Gastrocnemius medialis (tissue), 4 donors: ENCODE measurements at regions of chr16 and their contacts with region 1.

Region 1: GRCh38 chr16:30445408-30446202 is at the start of gene SEPHS2:
- DNase-seq: peak; percentile 96 to 100
- ATAC-seq: peak; percentile 98
- H3K4me3 ChIP-seq: peak within 1 kb of the TSS; percentile 89 to 100 (median 95)
- H3K27ac ChIP-seq: peak within 1 kb of the TSS; percentile 97 to 100 (median 98)
- H3K4me1 ChIP-seq: peaks cover 20 to 21% of the 10 kb centered on the region in 2 donors
- H3K27me3 ChIP-seq: no peaks in the 10 kb centered on the region
- CTCF ChIP-seq: peak in 4 of 5 experiments; percentile 26 to 64 (median 44)
- POLR2A ChIP-seq: peak; percentile 96
- total RNA-seq, gene SEPHS2: 23.7 to 29.5 (median 27.4) TPM

Region 2: DNA sequence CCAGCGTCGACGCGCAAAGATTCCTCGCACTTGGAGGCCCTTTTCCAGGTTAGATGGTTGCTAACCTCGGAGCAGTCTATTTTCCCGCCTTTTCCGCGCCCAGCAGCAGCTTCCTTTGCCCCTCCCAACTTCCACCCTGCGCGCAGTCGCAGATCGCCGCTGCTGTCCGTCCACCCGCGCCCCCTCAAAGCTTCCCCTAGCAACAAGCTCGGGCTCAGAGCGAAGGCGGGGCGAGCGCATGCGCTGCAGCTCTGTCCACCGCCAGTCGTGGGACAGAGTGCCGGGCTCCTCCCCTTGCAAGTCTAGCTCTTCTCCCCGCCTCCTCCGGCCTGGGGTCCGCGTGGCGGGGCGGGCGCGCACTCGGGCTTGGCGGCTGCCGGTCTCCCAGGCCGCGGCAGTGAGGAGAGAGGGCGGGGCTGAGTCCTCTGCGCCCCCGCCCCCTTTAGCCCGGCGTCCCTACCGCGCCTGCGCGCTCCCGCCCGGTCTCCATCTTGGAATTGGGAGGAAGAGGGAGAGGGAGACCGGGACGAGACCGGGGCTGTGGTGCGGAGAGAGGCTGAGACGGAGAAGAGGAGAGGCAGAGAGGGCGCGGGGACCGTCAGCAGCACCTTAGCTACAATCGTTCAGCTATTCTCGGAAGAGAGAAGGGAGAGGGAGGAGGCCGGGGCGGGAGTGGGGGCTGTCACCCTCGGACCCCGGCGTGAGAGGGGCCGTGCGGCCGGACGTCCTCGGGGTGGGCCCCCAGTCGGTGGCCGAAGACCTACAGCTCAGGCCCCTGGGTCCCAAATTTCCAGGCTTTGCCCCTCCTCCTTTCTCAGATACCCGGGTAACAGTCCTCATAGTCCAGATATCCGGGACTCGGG is 472.0 kb before region 1 on chr16 and contains the start of gene TAOK2:
- in situ Hi-C with region 1: no loop called
- intact Hi-C with region 1: no loop called
- DNase-seq: peak; percentile 97 to 99
- ATAC-seq: peak; percentile 91 to 94
- H3K4me3 ChIP-seq: peak within 1 kb of the TSS; percentile 90 to 99 (median 94)
- H3K27ac ChIP-seq: peak within 1 kb of the TSS; percentile 94 to 100 (median 98)
- H3K4me1 ChIP-seq: peaks cover 26 to 28% of the 10 kb centered on the region in 2 donors
- H3K27me3 ChIP-seq: no peaks in the 10 kb centered on the region
- CTCF ChIP-seq: no peak
- POLR2A ChIP-seq: peak; percentile 83 to 86
- total RNA-seq, gene TAOK2: 15.9 to 31.0 (median 22.1) TPM

Region 3: GRCh38 chr16:30417529-30418349 is 27.9 kb before region 1 on chr16:
- in situ Hi-C with region 1: no loop called
- intact Hi-C with region 1: no loop called
- DNase-seq: peak; percentile 67 to 85
- ATAC-seq: peak; percentile 84 to 86
- H3K4me3 ChIP-seq: peak overlapping the region; percentile 60 to 77 (median 66)
- H3K27ac ChIP-seq: peak overlapping the region; percentile 93 to 99 (median 96)
- H3K4me1 ChIP-seq: peaks cover 8 to 14% of the 10 kb centered on the region in 2 donors
- H3K27me3 ChIP-seq: no peaks in the 10 kb centered on the region
- CTCF ChIP-seq: peak; percentile 12 to 42 (median 37)
- POLR2A ChIP-seq: peak; percentile 63 to 73

Region 4: DNA sequence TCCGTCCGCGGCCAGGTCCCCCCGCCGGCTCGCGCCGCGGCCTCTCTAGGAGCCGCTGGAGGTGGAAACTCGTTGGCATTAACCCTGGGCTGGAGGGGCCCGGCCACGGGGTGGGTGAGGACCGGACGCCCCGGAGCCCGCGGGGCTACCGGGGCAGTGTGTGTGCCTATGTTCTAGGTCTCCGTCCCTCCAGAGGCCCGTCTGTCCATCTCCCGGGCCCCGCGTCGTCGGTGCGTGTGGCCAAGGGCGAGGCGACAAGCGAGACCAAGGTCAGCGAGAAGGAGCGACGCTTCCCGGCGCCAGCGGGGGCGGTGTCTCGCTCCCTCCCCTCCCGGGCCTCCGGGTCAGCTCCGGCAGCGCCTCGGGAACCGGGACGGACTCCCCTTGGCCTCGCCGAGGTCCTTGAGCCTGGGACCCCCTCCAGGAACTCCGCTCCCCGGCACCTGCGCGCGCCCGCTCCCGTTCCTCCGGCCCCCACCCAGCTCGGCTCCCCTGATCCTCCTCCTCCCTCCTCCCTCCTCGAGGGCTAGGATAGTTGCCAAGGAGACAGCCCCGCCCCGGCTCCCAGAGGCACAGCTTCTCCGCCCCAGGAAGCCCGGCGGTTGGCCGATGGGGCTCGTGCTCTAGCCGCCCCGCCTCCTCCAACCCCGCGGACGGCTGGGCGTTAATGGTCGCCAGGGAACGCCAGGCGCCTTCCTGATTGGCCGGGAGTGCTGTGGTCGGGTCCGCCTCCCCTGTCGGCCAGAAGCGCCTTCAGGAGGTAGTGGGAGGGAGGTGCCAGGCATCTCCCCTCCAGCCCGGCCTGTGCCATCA is 81.4 kb after region 1 on chr16:
- in situ Hi-C with region 1: loop called in 1 of 4 experiments (anchors 10 kb)
- intact Hi-C with region 1: loop called (anchors 2 kb)
- DNase-seq: peak; percentile 98
- ATAC-seq: peak; percentile 87 to 91
- H3K4me3 ChIP-seq: peak overlapping the region; percentile 66 to 91 (median 86)
- H3K27ac ChIP-seq: peak overlapping the region; percentile 96 to 100 (median 97)
- H3K4me1 ChIP-seq: peaks cover 19 to 36% of the 10 kb centered on the region in 2 donors
- H3K27me3 ChIP-seq: no peaks in the 10 kb centered on the region
- CTCF ChIP-seq: peak in 4 of 5 experiments; percentile 45 to 62 (median 52)
- POLR2A ChIP-seq: peak; percentile 80 to 88

Region 5: DNA sequence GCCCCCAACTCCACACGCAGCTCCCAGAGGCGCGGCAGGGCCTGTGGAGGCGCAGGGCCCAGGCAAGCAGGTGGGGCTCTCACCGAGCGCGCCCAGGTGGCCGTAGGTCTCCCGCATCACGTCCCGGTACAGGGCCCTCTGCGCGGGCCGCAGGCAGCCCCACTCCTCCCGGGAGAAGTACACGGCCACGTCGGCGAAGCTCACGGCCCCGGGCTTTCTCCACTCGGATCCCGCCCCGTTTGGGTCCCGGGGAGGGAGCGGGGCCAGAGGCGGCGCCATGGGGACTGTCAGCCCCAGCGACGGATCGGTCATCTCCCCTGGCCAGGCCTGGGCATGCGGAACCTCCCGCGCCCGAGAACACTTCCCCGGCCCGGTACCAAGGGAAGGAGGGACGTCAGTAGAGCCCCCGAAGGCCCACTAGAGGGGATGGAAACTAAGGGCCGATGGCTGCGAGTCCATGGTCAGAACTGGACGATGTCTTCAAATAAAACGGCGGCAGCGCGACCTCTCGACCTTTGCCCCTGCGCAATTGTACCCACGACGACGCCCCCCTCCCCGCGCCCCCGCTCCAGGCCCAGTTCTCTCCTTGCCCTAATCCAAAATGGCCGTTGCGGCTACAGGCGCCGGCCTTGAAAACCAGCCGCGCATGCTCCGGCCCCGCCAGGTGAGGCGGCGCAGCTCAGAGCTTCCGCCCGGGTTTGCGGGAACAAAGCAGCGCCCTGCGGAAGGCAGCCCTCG is 88.9 kb after region 1 on chr16 and contains the start of gene ZNF747:
- in situ Hi-C with region 1: loop called in 1 of 4 experiments (anchors 10 kb)
- intact Hi-C with region 1: no loop called
- DNase-seq: peak; percentile 93 to 95
- ATAC-seq: peak; percentile 87 to 91
- H3K4me3 ChIP-seq: peak within 1 kb of the TSS; percentile 65 to 88 (median 82)
- H3K27ac ChIP-seq: peak within 1 kb of the TSS; percentile 90 to 96 (median 94)
- H3K4me1 ChIP-seq: peaks cover 23 to 24% of the 10 kb centered on the region in 2 donors
- H3K27me3 ChIP-seq: no peaks in the 10 kb centered on the region
- CTCF ChIP-seq: peak in 1 of 5 experiments; percentile 6
- POLR2A ChIP-seq: peak; percentile 71 to 74
- total RNA-seq, gene ZNF747: 8.6 to 17.5 (median 13.1) TPM